ENCODE measurements at regions of chr21 and their contacts with region 1.

Region 1: GRCh38 chr21:33641336-33642026 is at the start of gene CRYZL1:
- DNase-seq: peak; percentile 100
- H3K4me3 ChIP-seq: peak within 1 kb of the TSS; percentile 87 to 99 (median 95)
- H3K27ac ChIP-seq: peak within 1 kb of the TSS; percentile 88 to 96 (median 92)
- H3K4me1 ChIP-seq: peaks cover 18 to 40% (median 32%) of the 10 kb centered on the region in 4 donors
- H3K27me3 ChIP-seq: no peaks in the 10 kb centered on the region
- CTCF ChIP-seq: no peak
- EP300 ChIP-seq: no peak
- POLR2A ChIP-seq: no peak
- total RNA-seq, gene CRYZL1: 26.8 to 40.3 (median 32.4) TPM

Region 2: GRCh38 chr21:33825915-33826314 is 184.4 kb after region 1 on chr21:
- intact Hi-C with region 1: loop called (anchors 10 kb)
- DNase-seq: no peak
- H3K4me3 ChIP-seq: no peak overlapping the region
- H3K27ac ChIP-seq: peak overlapping the region in 2 of 4 donors; percentile 1 to 50
- H3K4me1 ChIP-seq: peaks cover 10 to 46% (median 37%) of the 10 kb centered on the region in 4 donors
- H3K27me3 ChIP-seq: no peaks in the 10 kb centered on the region
- CTCF ChIP-seq: no peak
- EP300 ChIP-seq: no peak
- POLR2A ChIP-seq: no peak

Region 3: DNA sequence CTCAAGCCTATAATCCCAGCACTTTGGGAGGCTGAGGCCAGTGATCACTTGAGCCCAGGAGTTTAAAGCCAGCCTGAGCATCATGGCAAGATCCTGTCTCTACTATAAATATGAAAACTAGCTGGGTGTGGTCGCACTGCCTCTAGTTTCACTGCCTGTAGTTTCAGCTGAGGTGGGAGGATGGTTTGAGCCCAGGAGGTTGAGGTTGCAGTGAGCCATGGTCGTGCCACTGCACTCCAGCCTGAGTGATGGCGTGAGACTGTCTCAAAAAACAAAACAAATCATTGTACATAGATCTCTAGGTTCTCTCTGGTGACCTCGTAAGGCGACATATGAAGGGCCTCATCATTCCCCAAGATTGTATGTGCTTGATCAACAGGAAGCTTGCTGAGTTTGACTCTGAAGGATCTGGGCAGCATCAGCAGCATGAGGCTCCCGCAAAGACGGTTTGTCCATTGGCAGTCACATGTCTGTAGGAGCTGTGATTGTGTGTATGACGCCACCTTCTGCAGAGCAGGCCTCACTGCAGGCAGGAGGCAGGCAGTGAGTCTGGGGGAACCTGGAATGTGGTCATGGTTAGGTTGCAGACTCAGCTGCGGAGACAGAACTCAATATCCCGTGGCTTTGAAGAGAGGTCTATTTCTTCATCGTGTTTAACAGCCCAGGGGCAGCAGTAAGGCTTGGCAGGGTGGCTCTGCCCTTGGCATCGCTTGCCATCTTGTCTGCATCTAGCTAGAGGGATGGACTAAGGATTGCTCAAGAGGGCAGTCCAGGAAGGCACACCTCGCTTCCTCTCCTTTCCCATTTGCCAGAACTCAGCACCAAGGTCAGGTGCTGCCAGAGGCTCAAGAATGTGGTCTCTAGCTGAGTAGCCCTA is 260.2 kb after region 1 on chr21:
- intact Hi-C with region 1: loop called (anchors 5 kb)
- DNase-seq: no peak
- H3K4me3 ChIP-seq: no peak overlapping the region
- H3K27ac ChIP-seq: peak overlapping the region in 3 of 4 donors; percentile 16 to 42 (median 24)
- H3K4me1 ChIP-seq: peaks cover 0 to 16% (median 13%) of the 10 kb centered on the region in 4 donors
- H3K27me3 ChIP-seq: no peaks in the 10 kb centered on the region
- CTCF ChIP-seq: peak; percentile 34 to 48 (median 35)
- EP300 ChIP-seq: no peak
- POLR2A ChIP-seq: no peak

Measured in esophagus muscularis mucosa (tissue), 4 donors.